ENCODE measurements at regions of chr1 and their contacts with region 1.

Region 1: DNA sequence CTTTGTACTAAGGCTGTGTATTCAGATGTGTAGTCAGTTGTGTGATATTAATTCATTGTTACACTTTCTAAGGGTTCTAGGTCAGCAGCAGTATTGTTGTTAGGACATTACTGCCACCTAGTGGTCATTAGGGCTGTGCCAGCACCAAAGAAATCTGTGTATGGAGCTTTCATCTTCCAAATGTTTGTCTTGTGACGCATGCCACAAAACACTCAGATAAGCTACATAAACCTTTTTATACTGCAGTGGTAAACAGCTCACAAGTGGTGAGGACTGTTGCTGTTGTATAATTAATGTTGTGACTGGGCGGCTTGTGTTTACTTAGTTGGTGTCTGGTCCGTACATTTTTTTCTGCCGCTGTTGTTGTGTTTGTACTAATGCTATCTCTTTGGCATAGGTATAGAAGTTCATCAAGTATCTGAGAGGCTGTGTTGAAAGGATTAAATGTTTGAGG is 51.7 kb downstream of the S1PR1 start:
- DNase-seq: peak; percentile 80
- ATAC-seq: peak; percentile 31
- H3K4me3 Mint-ChIP-seq: no peak overlapping the region
- H3K27ac Mint-ChIP-seq: peak overlapping the region; percentile 58
- H3K4me1 Mint-ChIP-seq: peaks cover 92% of the 10 kb centered on the region
- H3K27me3 Mint-ChIP-seq: no peaks in the 10 kb centered on the region

Region 2: DNA sequence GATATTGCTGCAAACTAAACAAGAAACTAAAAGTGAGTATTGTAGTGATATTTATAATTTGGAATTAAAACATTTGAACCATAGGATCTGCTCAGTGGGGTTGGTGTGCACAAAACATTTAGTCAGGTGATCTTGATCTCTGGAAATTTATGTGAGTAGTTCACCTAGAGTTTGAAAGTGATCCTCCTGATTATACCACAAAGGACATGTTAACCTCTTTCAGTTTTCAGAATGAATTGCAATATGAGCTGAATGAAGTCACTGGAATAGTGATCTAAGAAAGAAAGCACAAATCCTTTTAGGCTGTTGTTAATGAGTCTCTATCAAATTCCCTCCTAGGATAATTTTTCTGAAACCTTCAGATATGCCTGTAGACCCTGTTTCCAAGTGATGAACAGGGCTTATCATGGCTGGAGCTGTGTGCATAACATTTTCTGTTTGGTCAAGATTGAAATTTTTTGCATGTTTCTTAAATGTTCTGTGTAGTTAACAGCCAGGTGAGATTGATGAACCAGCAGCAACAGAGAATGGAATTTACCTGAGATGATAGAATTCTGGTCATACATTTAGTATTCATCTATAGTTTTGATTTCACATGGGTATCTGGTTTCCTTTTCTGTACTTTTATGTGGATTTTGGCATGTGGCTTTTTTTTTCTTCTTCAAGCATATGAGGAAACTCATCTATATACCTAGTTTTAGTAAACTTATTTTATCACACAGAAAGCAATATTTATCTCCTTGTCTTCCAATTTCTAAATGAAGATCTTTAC is 910.7 kb before region 1 on chr1:
- CTCF ChIA-PET with region 1: no interaction called
- POLR2A ChIA-PET with region 1: no interaction called
- intact Hi-C with region 1: loop called in 1 of 2 experiments (anchors 2 kb)
- DNase-seq: no peak
- ATAC-seq: peak; percentile 89
- H3K4me3 Mint-ChIP-seq: no peak overlapping the region
- H3K27ac Mint-ChIP-seq: peak overlapping the region; percentile 84
- H3K4me1 Mint-ChIP-seq: peaks cover 62% of the 10 kb centered on the region
- H3K27me3 Mint-ChIP-seq: peaks cover 3% of the 10 kb centered on the region

Region 3: GRCh38 chr1:100921109-100921706 is 367.3 kb before region 1 on chr1:
- CTCF ChIA-PET with region 1: interaction called, 98 read pairs
- POLR2A ChIA-PET with region 1: no interaction called
- intact Hi-C with region 1: loop called (anchors 1 kb)
- DNase-seq: no peak
- ATAC-seq: no peak
- H3K4me3 Mint-ChIP-seq: no peak overlapping the region
- H3K27ac Mint-ChIP-seq: peak overlapping the region; percentile 70
- H3K4me1 Mint-ChIP-seq: peaks cover 43% of the 10 kb centered on the region
- H3K27me3 Mint-ChIP-seq: no peaks in the 10 kb centered on the region

Region 4: DNA sequence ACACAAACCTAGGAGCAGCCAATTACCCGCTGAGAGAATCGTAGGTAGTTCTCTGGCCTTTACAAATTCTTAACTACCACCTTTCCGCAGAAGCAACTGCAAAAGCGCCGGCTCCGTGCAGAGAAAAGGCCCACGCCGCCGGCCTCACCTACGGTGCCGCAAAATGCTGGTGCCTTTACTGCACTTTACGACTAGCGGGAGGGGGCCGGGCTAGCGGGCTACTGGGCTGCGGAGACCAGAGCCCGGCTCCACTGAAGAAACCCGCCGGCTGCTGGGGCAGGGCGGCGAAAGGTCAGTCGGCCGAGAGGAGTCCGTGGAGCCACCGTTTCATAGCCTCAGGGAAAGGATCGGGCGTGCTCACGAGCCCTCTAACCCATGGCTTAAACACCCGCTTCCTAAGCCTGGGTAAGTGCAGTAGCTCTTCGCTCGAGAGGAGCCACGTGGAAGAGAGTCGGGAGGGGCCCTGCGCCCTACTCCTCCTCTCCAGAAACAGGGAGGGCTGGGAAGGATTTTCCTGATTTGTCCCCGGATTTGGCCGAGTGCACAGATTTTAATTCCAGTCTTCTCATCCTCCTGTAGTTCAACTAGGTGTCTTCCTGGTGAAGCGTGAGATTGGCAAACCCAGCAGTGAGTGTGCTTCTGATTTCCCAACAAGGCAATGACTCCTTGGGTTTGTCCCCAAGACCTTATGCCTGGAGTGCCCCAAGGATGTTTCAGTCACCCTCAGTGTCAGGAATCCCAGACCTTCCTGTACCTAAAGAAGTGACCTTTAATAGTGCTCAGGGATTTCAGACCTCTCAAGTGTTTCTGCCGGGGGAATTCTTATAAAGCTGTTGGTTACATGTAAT is 262.6 kb before region 1 on chr1 and contains the start of gene DPH5:
- CTCF ChIA-PET with region 1: interaction called, 5 read pairs
- POLR2A ChIA-PET with region 1: no interaction called
- intact Hi-C with region 1: loop called (anchors 1 to 2 kb)
- DNase-seq: peak; percentile 95
- ATAC-seq: peak; percentile 96
- H3K4me3 Mint-ChIP-seq: peak within 1 kb of the TSS; percentile 93
- H3K27ac Mint-ChIP-seq: peak within 1 kb of the TSS; percentile 98
- H3K4me1 Mint-ChIP-seq: peaks cover 55% of the 10 kb centered on the region
- H3K27me3 Mint-ChIP-seq: no peaks in the 10 kb centered on the region
- total RNA-seq, gene DPH5: 48.4 to 59.6 TPM

Region 5: DNA sequence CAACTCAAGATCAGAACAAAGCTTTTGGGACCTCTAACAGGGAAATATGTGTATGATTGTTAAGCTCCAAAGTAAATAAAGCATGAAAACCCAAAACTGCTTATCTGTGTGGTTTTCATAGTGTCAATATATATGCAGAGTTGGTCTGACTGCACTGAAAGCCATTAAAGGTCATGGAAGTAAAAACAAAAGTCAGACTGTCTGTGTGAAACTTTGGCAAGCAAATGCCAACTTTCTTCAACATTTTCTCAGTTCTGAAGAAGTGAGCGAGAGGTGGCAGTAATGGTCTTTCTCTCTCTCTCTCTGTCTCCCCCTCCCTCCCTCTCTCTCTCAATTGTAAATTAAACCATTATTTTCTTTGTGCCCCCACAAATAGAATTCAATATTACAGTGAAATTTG is 151.8 kb before region 1 on chr1:
- CTCF ChIA-PET with region 1: interaction called, 31 read pairs
- POLR2A ChIA-PET with region 1: interaction called, 5 read pairs
- intact Hi-C with region 1: loop called (anchors 1 kb)
- DNase-seq: peak; percentile 45
- ATAC-seq: peak; percentile 85
- H3K4me3 Mint-ChIP-seq: peak overlapping the region; percentile 38
- H3K27ac Mint-ChIP-seq: peak overlapping the region; percentile 91
- H3K4me1 Mint-ChIP-seq: peaks cover 69% of the 10 kb centered on the region
- H3K27me3 Mint-ChIP-seq: no peaks in the 10 kb centered on the region

Region 6: DNA sequence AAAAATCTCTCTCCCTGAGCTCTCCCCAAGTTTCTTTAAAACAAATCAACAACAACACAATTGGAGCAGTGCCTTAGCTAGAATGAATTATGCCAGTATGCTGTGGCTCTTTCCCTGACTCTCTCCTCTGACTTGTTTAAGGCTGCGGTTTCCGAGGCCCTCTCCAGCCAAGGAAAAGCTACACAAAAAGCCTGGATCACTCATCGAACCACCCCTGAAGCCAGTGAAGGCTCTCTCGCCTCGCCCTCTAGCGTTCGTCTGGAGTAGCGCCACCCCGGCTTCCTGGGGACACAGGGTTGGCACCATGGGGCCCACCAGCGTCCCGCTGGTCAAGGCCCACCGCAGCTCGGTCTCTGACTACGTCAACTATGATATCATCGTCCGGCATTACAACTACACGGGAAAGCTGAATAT is 49.8 kb before region 1 on chr1:
- CTCF ChIA-PET with region 1: interaction called, 37 read pairs
- POLR2A ChIA-PET with region 1: interaction called, 6 read pairs
- intact Hi-C with region 1: loop called (anchors 1 kb)
- DNase-seq: peak; percentile 95
- ATAC-seq: peak; percentile 30
- H3K4me3 Mint-ChIP-seq: peak overlapping the region; percentile 89
- H3K27ac Mint-ChIP-seq: peak overlapping the region; percentile 99
- H3K4me1 Mint-ChIP-seq: peaks cover 51% of the 10 kb centered on the region
- H3K27me3 Mint-ChIP-seq: no peaks in the 10 kb centered on the region

Region 7: DNA sequence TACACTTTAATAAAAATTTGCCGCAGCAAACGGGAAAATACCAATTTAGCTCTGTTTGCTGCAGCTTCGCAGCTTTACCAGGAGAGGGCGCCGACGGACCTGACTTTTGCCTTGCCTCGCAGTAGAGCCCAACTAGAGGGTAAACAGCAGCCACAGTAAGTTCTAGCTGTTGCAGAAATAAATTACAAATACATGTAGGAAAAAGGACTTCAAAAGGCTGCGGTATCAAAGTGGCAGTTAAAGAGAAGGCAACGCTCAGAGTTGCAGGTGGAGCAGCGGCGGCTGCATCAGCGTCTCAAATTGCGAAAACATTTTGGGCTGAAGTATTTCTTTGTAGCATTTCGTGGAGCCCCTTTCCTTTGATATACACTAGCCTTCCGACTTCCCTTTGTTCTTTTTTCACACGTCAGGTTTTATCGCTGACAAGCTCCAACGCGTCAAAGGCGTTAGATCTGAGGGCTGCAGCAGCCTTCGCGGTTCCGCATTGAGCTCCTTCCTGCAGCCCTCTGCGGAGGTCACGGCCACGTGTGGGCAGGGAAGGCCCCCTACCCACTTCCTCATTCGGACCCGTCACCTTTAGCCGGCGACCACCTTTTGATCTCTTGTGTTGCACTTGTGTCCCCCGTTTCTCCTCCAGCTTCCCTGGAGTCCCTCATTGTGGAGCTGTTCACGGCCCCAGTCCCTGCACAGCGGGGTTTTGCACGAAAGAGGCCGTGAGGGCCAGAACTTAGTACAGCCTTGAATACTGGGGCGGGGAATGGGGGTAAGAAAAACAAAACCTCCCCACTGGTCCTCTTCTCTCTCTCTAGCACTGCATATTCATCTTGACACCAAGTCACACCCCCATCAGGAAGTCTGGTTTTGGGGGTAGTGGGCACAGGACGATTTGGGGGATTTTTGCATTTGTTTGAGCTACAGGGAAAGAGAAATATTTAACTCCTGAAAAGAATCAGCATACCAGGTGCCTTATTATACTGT is 21.1 kb after region 1 on chr1:
- CTCF ChIA-PET with region 1: interaction called, 15 read pairs
- POLR2A ChIA-PET with region 1: interaction called, 7 read pairs
- intact Hi-C with region 1: loop called in 1 of 2 experiments (anchors 1 kb)
- DNase-seq: peak; percentile 83
- ATAC-seq: peak; percentile 57
- H3K4me3 Mint-ChIP-seq: peak overlapping the region; percentile 63
- H3K27ac Mint-ChIP-seq: peak overlapping the region; percentile 80
- H3K4me1 Mint-ChIP-seq: peaks cover 71% of the 10 kb centered on the region
- H3K27me3 Mint-ChIP-seq: no peaks in the 10 kb centered on the region